Right ventricle myocardium inferior (tissue), 1 donor: ENCODE measurements at regions of chrX and their contacts with region 1.

Region 1: DNA sequence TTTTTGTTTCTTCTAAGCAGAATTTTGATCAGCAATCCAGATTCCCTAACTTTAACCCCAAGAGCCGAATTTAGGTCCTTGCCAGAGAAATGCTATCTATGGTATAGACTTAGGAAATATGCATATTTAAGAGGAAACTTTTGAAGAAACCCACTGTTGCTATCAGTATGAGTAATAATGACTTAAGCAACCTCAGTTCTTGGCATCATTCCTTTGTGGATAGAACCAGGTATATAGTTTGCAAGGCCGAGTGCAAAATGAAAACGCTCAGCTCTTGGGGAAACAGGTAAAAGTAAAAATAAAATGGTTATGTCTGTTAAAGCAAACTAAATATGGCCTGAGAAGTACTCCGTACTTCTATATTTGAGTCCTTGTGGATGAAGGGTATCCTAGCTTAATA is 78.1 kb downstream of the ARSF start:
- DNase-seq: no peak
- ATAC-seq: no peak

Region 2: GRCh38 chrX:3638280-3638873 is 519.0 kb after region 1 on chrX:
- intact Hi-C with region 1: loop called (anchors 10 kb)
- DNase-seq: no peak
- ATAC-seq: no peak